K562 (cell line): ENCODE measurements at regions of chr15 and their contacts with region 1.

Region 1: DNA sequence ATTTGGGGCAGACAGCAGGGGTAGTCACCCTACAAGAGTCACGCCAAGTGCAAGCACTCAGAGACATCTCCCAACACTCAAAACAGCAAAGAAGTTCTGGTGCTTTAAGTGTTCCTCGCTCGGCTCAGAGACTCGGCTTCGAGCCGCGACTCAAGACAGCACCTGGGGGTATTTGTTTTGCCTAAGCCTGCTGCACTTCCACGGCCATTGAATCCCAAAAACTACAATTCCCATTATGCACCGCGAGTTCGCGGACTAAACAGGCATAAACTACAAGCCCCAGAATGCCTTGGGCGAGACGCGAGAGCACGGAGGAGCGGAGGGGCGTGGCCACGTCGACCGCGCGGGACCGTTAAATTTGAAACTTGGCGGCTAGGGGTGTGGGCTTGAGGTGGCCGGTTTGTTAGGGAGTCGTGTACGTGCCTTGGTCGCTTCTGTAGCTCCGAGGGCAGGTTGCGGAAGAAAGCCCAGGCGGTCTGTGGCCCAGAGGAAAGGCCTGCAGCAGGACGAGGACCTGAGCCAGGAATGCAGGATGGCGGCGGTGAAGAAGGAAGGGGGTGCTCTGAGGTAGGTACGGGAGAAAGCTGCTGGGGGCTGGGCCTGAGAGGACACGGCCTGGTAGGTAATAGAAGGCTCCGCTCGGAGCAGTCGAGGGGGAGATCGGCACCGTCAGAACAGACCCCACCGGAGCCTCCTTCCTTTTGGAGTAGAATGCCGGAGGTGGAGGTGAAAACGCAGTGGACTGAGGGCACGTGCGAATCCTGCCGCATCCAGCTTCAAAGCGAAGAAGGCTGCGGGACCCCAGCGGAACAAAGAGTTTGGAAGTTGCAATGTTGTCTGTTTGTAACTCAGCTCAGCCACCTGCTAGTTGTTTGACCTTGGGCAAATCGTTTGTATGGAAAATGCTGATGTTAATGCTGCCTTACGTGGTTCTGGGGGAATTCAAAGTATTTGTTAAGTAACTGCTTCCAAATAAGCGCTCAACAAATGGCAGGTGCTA is at the start of gene BUB1B:
- DNase-seq: peak; percentile 94 to 97 (median 96)
- ATAC-seq: peak; percentile 95
- H3K4me3 ChIP-seq: peak within 1 kb of the TSS; percentile 68
- H3K27ac ChIP-seq: peak within 1 kb of the TSS; percentile 90
- H3K4me1 ChIP-seq: peaks cover 0 to 15% of the 10 kb centered on the region in 2 experiments; a peak in 3 of 5 replicates
- H3K27me3 ChIP-seq: no peaks in the 10 kb centered on the region
- CTCF ChIP-seq: no peak
- EP300 ChIP-seq: no peak
- POLR2A ChIP-seq: peak; percentile 94
- RAD21 ChIP-seq: no peak
- polyA plus RNA-seq, gene BUB1B: 28.7 to 43.3 TPM

Region 2: GRCh38 chr15:40054605-40055545 is 106.1 kb before region 1 on chr15:
- CTCF ChIA-PET with region 1: no interaction called
- POLR2A ChIA-PET with region 1: interaction called, 4 read pairs
- in situ Hi-C with region 1: no loop called
- intact Hi-C with region 1: loop called (anchors 5 kb)
- DNase-seq: no peak
- ATAC-seq: no peak
- H3K4me3 ChIP-seq: no peak overlapping the region
- H3K27ac ChIP-seq: no peak overlapping the region
- H3K4me1 ChIP-seq: peaks cover 0 to 13% of the 10 kb centered on the region in 2 experiments; a peak in 3 of 5 replicates
- H3K27me3 ChIP-seq: no peaks in the 10 kb centered on the region
- CTCF ChIP-seq: no peak
- EP300 ChIP-seq: no peak
- POLR2A ChIP-seq: no peak
- RAD21 ChIP-seq: no peak

Region 3: DNA sequence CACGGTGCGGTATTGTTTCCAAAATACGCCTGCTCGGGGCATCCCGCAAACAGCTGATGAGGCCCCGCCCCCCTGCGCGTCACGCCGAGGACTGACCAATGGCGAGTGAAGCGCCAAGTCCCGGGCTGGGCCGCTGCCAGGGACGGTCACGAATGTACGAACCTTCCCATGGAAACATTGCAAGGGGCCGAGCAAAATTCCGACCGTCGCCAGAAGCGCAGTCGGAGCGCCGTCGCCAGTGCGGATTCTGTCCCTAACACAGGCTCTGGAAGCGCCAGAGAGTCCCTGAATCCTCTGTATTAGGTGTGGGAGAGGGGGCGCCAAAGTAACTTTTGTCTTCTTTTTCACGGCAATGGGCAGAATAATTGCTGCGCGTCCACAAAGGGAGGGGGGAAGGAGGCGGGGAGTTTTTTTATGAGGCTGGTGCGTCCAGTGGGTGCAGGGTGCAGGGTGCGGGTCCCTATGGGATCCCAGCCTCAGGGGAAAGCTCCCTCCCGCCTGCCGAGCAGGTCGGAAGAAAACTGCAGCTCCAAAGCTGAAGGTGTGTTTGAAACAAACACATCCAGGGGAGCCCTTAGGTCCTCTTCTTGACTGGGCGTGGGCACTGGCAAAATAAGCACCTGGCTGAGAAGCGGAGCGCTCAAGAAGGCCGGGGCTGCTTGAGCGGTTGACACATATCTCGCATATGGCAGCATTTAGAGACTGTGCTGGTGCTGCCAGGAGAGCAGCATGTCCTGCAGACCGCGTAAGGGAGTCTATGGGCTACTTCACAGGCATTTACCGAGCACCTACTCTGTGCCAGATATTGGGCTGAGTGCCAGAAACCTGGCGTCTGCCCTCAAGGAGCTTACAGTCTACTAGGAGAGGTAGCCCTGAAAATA is 51.9 kb before region 1 on chr15 and contains the start of gene BMF:
- CTCF ChIA-PET with region 1: no interaction called
- POLR2A ChIA-PET with region 1: interaction called, 3 read pairs
- in situ Hi-C with region 1: no loop called
- intact Hi-C with region 1: loop called (anchors 2 kb)
- DNase-seq: peak; percentile 96 to 99 (median 97)
- ATAC-seq: peak; percentile 85
- H3K4me3 ChIP-seq: peak within 1 kb of the TSS; percentile 62
- H3K27ac ChIP-seq: peak within 1 kb of the TSS; percentile 29; the same call in 1 of the 3 replicates
- H3K4me1 ChIP-seq: peaks cover 40 to 45% of the 10 kb centered on the region in 2 experiments
- H3K27me3 ChIP-seq: peaks cover 3% of the 10 kb centered on the region in 2 experiments; a peak in 1 of 5 replicates
- CTCF ChIP-seq: peak; percentile 69 to 79 (median 73)
- EP300 ChIP-seq: peak; percentile 63
- POLR2A ChIP-seq: no peak
- RAD21 ChIP-seq: peak; percentile 45 to 47
- polyA plus RNA-seq, gene BMF: not detected

Region 4: DNA sequence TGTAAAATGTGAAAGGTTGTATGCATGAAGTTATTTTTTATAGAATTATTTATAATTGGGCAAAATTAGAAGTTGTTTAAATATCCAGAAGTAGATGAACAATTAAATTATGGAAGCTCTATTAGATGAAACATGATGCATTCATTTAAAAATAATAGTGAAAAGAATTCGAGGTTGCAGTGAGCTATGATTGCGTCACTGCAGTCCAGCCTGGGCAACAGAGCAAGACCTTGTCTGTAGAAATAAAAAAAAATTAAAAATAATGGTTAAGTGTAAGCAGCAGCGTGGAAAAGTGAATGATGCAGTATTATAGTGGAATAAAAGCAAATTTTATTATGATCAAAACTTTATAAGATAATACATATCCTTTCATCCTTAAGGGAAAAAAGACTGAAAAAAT is 14.2 kb after region 1 on chr15:
- CTCF ChIA-PET with region 1: no interaction called
- POLR2A ChIA-PET with region 1: interaction called, 20 read pairs
- in situ Hi-C with region 1: no loop called
- intact Hi-C with region 1: no loop called
- DNase-seq: no peak
- ATAC-seq: no peak
- H3K4me3 ChIP-seq: no peak overlapping the region
- H3K27ac ChIP-seq: no peak overlapping the region
- H3K4me1 ChIP-seq: no peaks in the 10 kb centered on the region
- H3K27me3 ChIP-seq: no peaks in the 10 kb centered on the region
- CTCF ChIP-seq: no peak
- EP300 ChIP-seq: no peak
- POLR2A ChIP-seq: no peak
- RAD21 ChIP-seq: no peak

Region 5: DNA sequence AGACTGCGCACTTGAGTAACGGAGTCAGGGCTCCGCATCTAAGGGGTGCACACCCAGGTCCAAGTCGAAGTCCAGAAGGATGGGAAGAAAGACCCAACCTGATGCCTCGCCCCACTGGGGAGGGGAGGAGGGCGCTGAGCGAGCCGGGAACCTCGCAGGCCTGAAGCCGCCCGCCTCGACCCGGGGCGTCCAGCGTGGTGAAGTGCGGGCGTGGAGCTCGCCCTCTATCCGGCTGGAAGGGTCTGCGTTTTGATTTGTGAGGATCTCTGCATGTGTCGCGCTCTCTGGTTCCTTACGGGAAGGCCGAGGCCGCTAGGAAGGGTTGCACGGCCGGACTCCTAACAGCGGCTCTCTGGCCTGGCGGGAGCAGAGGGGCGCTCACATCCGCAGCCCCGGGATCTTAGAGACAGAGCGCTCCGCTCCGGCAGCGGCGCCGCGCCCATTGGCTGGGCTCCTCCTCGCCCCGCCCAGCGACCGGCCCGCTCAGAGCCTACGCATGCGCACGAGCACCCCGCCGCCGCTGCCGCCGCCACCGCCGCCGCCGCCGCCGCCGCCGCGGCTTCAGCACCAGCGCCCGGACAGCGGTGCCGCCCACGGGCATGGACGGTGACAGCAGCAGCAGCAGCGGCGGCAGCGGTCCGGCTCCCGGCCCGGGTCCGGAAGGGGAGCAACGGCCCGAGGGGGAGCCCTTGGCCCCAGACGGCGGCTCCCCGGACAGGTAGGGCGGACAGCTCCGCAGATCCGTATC is 196.9 kb after region 1 on chr15 and contains the start of gene DISP2:
- CTCF ChIA-PET with region 1: no interaction called
- POLR2A ChIA-PET with region 1: no interaction called
- in situ Hi-C with region 1: no loop called
- intact Hi-C with region 1: no loop called
- DNase-seq: peak; percentile 89 to 100 (median 100)
- ATAC-seq: peak; percentile 89
- H3K4me3 ChIP-seq: peak within 1 kb of the TSS; percentile 53
- H3K27ac ChIP-seq: no peak within 1 kb of the TSS
- H3K4me1 ChIP-seq: peaks cover 9 to 26% of the 10 kb centered on the region in 2 experiments; a peak in 4 of 5 replicates
- H3K27me3 ChIP-seq: peaks cover 0 to 9% of the 10 kb centered on the region in 2 experiments; a peak in 1 of 5 replicates
- CTCF ChIP-seq: no peak
- EP300 ChIP-seq: no peak
- POLR2A ChIP-seq: no peak
- RAD21 ChIP-seq: no peak
- polyA plus RNA-seq, gene DISP2: 0.08 TPM in 1 of 2 experiments, not detected in the other